ENCODE measurements at regions of chr2 and their contacts with region 1.

Region 1: GRCh38 chr2:206693399-206694137 is 24.6 kb downstream of the DYTN start:
- DNase-seq: no peak
- H3K4me3 ChIP-seq: no peak overlapping the region
- H3K27ac ChIP-seq: no peak overlapping the region
- H3K4me1 ChIP-seq: no peaks in the 10 kb centered on the region
- H3K27me3 ChIP-seq: no peaks in the 10 kb centered on the region
- CTCF ChIP-seq: peak in 2 of 3 experiments; percentile 61 to 69

Region 2: GRCh38 chr2:206783718-206784117 is 90.2 kb after region 1 on chr2:
- intact Hi-C with region 1: loop called (anchors 5 kb)
- DNase-seq: no peak
- H3K4me3 ChIP-seq: no peak overlapping the region
- H3K27ac ChIP-seq: no peak overlapping the region
- H3K4me1 ChIP-seq: no peaks in the 10 kb centered on the region
- H3K27me3 ChIP-seq: no peaks in the 10 kb centered on the region
- CTCF ChIP-seq: no peak

Region 3: GRCh38 chr2:207484444-207485391 is 791.1 kb after region 1 on chr2:
- intact Hi-C with region 1: loop called (anchors 5 kb)
- DNase-seq: no peak
- H3K4me3 ChIP-seq: no peak overlapping the region
- H3K27ac ChIP-seq: peak overlapping the region in 1 of 2 donors; percentile 43
- H3K4me1 ChIP-seq: peaks cover 0 to 17% of the 10 kb centered on the region in 2 donors
- H3K27me3 ChIP-seq: no peaks in the 10 kb centered on the region
- CTCF ChIP-seq: no peak

Region 4: GRCh38 chr2:208072250-208072892 is 1378.8 kb after region 1 on chr2:
- intact Hi-C with region 1: loop called (anchors 5 kb)
- DNase-seq: peak in 1 of 2 donors; percentile 78
- H3K4me3 ChIP-seq: no peak overlapping the region
- H3K27ac ChIP-seq: no peak overlapping the region
- H3K4me1 ChIP-seq: no peaks in the 10 kb centered on the region
- H3K27me3 ChIP-seq: no peaks in the 10 kb centered on the region
- CTCF ChIP-seq: peak; percentile 63 to 74 (median 70)

Measured in ascending aorta (tissue), 2 donors.